CD4-positive, alpha-beta memory T cell (primary cell): ENCODE measurements at regions of chr10 and their contacts with region 1.

Region 1: DNA sequence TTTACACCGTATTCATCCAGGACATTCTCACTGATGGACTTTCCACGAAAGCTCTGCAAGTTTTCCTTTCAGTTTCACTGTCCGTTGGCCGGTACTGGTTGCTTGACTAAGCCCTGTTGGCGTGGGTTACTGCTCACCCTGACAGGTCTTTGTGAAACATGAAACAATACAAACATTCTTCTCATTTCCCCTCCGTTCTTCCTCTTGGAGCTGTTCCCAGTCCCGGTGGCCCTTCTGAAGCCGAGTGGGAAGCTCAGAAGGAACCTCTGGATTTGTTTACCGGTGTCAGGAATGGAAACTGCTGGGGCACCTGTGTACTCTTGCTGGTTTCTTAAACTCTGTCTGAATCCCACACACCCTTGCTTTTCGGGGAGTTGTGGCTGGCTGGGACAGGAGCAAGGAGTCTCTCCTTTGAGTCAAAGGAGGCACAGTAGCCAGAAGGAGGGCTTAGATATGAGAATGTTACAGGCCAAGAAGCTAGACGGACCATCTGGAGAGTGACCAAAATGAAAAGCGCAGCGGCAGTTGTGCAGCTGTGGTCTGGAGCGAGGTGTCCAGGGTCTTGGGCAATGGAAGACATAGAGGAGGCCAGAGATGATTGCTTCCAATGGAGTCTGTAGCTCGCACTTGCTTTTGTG is 45.7 kb downstream of the LYZL2 start:
- DNase-seq: no peak
- H3K4me3 ChIP-seq: no peak overlapping the region
- H3K4me3 Mint-ChIP-seq: peak overlapping the region; percentile 33 to 84 (median 66)
- H3K27ac ChIP-seq: no peak overlapping the region
- H3K27ac Mint-ChIP-seq: peak overlapping the region in 1 of 7 donors; percentile 81
- H3K4me1 ChIP-seq: no peaks in the 10 kb centered on the region
- H3K4me1 Mint-ChIP-seq: peaks cover 1 to 9% (median 6%) of the 10 kb centered on the region in 4 donors
- H3K27me3 ChIP-seq: no peaks in the 10 kb centered on the region
- H3K27me3 Mint-ChIP-seq: peaks cover 3 to 8% of the 10 kb centered on the region in 2 donors

Region 2: DNA sequence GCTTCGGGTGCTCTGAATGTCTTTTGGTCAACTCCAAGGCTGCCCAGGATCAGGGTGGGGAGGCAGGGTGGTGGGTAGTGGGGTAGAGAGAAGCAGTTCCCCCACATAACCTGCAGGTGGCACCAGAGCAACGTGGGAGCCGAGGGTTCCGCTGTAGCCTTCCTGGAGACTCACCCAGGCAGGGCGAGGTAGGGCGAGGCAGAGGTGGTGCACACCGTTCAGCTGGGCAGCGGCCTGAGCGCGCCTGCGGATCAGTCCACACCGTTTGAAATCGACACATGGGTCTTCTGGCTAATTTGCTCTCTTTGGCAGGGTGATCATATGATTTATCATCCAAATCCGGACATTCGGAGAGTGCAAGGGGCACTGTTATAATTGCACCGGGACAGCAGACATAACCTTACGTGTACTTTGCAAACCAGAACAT is 191.3 kb before region 1 on chr10:
- CTCF ChIA-PET with region 1: interaction called, 217 read pairs
- POLR2A ChIA-PET with region 1: no interaction called
- intact Hi-C with region 1: no loop called
- DNase-seq: peak; percentile 66 to 75 (median 67)
- H3K4me3 ChIP-seq: no peak overlapping the region
- H3K4me3 Mint-ChIP-seq: peak overlapping the region in 1 of 8 donors; percentile 4
- H3K27ac ChIP-seq: no peak overlapping the region
- H3K27ac Mint-ChIP-seq: peak overlapping the region in 1 of 7 donors; percentile 62
- H3K4me1 ChIP-seq: peaks cover 6% of the 10 kb centered on the region
- H3K4me1 Mint-ChIP-seq: peaks cover 2 to 5% (median 4%) of the 10 kb centered on the region in 4 donors
- H3K27me3 ChIP-seq: no peaks in the 10 kb centered on the region
- H3K27me3 Mint-ChIP-seq: peaks cover 8 to 13% of the 10 kb centered on the region in 2 donors

Region 3: GRCh38 chr10:30573721-30574431 is 10.0 kb before region 1 on chr10:
- CTCF ChIA-PET with region 1: interaction called, 11 read pairs
- POLR2A ChIA-PET with region 1: no interaction called
- intact Hi-C with region 1: no loop called
- DNase-seq: no peak
- H3K4me3 ChIP-seq: no peak overlapping the region
- H3K4me3 Mint-ChIP-seq: no peak overlapping the region
- H3K27ac ChIP-seq: no peak overlapping the region
- H3K27ac Mint-ChIP-seq: no peak overlapping the region
- H3K4me1 ChIP-seq: no peaks in the 10 kb centered on the region
- H3K4me1 Mint-ChIP-seq: no peaks in the 10 kb centered on the region
- H3K27me3 ChIP-seq: no peaks in the 10 kb centered on the region
- H3K27me3 Mint-ChIP-seq: peaks cover 2 to 3% of the 10 kb centered on the region in 2 donors